ENCODE measurements at regions of chr3 and their contacts with region 1.

Region 1: DNA sequence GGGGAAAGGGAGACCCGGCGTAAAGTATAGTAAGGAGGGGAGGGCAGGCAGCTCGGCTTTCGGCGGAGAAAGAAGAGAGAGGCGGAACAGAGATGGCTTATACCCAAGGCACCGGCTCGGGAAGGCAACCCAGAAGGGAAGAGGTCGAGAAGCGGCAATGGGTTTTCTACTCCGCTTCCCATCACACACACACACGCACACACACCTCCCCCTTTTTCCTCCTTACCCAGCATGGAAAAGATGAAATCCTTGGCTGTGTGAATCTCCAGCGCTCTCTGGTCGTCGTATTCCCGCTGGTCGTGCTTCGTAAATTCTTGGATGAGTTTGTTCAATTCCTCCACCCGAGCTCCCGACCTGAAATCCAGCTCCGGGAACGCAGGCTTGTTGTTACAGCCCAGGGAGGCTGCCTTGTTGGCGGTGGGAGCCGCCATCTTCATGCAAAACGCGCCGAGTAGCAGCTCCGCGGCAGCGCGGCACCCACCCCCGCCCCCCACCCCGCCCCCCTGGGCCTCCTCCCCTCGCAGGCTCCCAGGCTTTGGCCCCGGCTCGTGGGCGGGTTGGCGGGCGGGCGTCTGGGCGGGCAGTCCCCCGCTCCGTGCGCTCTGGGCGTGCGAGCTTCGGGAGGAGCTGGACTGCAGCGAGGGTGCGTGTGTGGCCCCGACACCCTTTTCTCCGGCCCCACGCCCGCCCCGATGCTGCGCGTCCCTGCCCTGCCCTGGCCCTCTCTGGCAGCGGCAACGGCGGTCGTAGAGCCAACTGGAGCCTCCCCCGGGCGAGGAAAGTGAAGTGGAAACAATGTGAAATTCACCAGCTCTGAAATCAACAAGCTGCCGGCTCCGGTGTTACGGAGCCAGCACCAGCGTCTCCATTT is at the start of gene MB21D2:
- DNase-seq: peak; percentile 86
- H3K4me3 ChIP-seq: peak within 1 kb of the TSS; percentile 52 to 81 (median 60)
- H3K27ac ChIP-seq: peak within 1 kb of the TSS; percentile 44 to 88 (median 84)
- H3K4me1 ChIP-seq: peaks cover 0 to 33% (median 17%) of the 10 kb centered on the region in 6 donors
- H3K27me3 ChIP-seq: peaks cover 0 to 70% (median 8%) of the 10 kb centered on the region in 7 donors
- CTCF ChIP-seq: peak in 1 of 11 experiments; percentile 25
- POLR2A ChIP-seq: peak in 1 of 3 donors; percentile 14
- total RNA-seq, gene MB21D2: 1.8 to 3.5 (median 2.1) TPM

Region 2: DNA sequence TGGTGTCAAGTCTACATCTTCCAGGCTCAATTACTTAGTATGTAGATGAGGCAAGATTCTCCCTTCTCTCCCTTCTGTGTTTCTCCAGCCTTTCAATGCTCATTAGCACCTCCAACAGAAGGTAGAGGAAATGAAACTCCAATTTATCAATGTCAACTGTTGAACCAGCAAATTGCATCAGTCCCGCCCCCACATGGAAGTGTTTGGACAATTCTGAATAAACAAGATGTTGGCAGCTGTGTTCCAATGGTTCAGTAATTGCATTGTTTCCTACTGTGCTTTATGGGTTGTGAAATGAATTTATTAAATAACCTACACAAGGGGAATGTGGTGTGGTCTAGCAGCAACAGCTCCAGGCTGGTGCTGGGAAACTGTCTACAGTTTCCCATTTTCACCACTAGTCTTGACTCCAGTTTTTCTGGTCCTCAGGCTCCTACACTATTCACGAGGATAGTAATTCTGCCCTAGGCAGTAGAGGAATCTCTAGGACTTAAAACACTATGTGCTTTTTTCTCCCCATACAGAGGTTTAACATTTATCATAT is 91.9 kb before region 1 on chr3:
- intact Hi-C with region 1: loop called (anchors 10 kb)
- DNase-seq: no peak
- H3K4me3 ChIP-seq: no peak overlapping the region
- H3K27ac ChIP-seq: no peak overlapping the region
- H3K4me1 ChIP-seq: peaks cover 0 to 5% (median 0%) of the 10 kb centered on the region in 6 donors
- H3K27me3 ChIP-seq: no peaks in the 10 kb centered on the region
- CTCF ChIP-seq: no peak
- POLR2A ChIP-seq: no peak

Measured in spleen (tissue), 13 donors.